ENCODE measurements at regions of chr5 and their contacts with region 1.

Region 1: DNA sequence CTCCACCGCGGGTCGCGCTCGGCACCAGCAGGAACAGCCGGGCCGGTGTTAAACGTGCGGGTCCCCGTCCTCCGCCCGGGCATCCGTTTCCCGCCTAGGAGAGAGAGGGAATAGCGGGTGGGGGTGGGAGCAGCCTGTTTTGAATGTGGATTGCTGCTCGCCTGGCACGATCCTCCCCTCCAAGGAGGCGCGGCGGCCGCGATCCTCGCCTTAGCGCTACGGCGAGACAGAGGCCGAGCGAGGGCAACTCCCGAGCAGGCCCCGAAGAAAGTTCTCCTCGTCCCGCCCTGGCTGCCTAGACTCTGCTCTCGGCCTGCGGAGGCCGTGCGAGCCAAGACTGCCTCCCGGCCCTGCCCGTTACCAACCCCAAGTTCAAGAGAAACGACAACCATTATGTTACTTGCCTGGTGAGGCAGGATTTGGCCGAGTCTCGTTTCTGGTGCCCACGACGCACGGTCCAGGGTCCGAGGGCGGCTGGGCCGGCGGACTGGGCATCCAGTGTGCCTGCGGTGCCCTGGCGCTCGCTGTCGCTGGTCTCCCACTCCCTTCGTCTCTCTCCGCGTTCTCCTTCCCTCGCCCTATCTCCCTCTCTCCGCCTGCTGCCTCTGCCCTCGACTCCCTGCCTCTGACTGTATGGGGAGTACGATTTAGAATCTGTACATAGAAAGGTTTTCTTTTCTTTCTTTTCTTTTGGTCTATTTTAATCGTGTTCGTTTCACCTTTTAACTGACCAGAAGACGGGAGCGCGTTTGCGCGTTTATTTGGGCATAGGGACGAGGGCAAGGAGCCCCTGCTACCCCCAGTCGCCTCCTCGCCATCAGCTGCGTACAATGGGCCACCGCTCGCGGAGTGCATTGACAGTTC is 724 bp downstream of the NR2F1-AS1 start:
- DNase-seq: peak in 7 of 42 donors; percentile 26 to 54 (median 35)

Region 2: DNA sequence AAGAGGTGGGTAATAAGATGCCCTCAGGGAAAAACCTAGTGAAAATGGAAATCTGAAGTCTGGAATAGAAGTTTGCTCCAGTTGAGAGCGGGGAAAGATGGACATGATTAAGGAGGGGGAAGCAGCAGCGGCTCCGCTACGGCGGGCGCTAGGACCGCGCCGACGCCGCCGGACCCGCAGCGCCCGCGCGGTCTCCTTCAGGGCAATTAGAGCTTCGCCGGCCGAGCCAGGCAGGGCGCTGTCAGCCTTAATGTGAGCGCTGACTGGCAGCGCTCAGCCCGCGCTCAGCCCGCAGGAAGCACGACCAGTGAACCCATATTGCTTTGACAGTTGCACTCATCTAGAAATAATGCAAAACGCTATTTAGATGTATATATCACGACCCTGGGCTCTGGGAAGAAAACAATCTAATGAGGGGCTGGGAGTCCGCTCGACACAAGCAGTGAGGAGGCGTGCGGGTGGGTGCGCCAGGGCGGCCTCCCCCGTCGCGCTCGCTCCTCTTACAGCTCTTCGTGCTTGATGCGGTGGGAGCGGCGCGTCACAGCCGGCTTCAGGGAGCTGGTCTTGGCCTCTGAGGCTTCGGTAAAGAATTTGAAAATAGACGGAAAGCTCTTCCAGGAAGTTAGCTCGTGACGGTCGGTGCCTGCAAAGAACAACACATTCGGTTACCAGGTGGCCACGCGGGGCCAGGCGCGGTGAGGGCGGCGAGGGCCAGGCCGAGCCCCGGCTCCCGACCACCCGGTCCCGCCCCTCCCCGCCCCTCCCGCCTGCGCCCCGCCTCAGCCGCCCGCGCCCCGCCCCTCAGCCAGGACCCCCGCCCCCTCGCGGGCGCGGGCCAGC is 40.4 kb after region 1 on chr5:
- intact Hi-C with region 1: loop called (anchors 5 kb)
- DNase-seq: peak; percentile 42 to 92 (median 79)

Region 3: GRCh38 chr5:93800988-93801811 is 220.9 kb after region 1 on chr5:
- intact Hi-C with region 1: loop called (anchors 2 kb)
- DNase-seq: peak in 18 of 42 donors; percentile 5 to 76 (median 42)

Measured in head of caudate nucleus (tissue), 42 donors.